ENCODE measurements at regions of chr16 and their contacts with region 1.

Region 1: DNA sequence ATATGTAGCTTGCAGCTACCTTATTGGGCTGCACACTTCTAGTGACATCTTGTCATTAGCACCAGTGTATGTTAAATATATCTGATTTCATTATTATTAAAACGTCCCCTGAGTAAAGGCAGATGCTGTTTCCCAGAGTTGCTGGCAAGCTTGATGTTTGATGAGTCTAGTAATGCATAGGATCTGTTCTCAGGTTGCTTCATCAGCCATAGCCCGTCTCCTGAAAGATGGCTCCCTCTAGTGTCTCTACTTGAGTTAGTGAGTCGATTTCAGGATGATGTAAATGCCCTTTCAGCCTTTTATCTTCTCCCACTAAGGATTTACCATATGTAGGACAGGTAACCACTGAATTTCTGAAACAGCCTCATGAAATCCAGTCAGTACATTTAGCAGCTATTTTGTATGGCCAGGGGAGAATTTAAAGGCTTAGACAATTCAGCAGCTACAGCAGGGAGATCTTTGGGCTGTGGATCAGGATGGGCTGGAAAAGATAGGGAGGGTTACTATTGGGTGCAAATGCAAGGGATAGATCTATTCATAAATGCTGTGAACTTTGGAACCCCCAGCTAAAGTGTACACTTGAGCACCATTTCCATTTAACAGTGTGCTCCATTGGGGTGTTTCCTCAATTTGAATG is 376.3 kb downstream of the CNTNAP4 start:
- DNase-seq: peak; percentile 44
- H3K4me3 Mint-ChIP-seq: no peak overlapping the region
- H3K27ac Mint-ChIP-seq: no peak overlapping the region
- H3K4me1 Mint-ChIP-seq: peaks cover 12% of the 10 kb centered on the region
- H3K27me3 Mint-ChIP-seq: peaks cover 13% of the 10 kb centered on the region
- CTCF ChIP-seq: peak; percentile 56

Region 2: GRCh38 chr16:75789237-75789636 is 864.3 kb before region 1 on chr16:
- CTCF ChIA-PET with region 1: no interaction called
- intact Hi-C with region 1: loop called (anchors 5 kb)
- DNase-seq: peak; percentile 38
- H3K4me3 Mint-ChIP-seq: no peak overlapping the region
- H3K27ac Mint-ChIP-seq: no peak overlapping the region
- H3K4me1 Mint-ChIP-seq: no peaks in the 10 kb centered on the region
- H3K27me3 Mint-ChIP-seq: peaks cover 29% of the 10 kb centered on the region
- CTCF ChIP-seq: peak; percentile 81

Region 3: GRCh38 chr16:75801307-75801706 is 852.2 kb before region 1 on chr16:
- CTCF ChIA-PET with region 1: interaction called, 9 read pairs
- intact Hi-C with region 1: loop called (anchors 5 kb)
- DNase-seq: no peak
- H3K4me3 Mint-ChIP-seq: no peak overlapping the region
- H3K27ac Mint-ChIP-seq: no peak overlapping the region
- H3K4me1 Mint-ChIP-seq: no peaks in the 10 kb centered on the region
- H3K27me3 Mint-ChIP-seq: peaks cover 27% of the 10 kb centered on the region
- CTCF ChIP-seq: no peak

Region 4: GRCh38 chr16:76278980-76279379 is 374.5 kb before region 1 on chr16:
- CTCF ChIA-PET with region 1: interaction called, 15 read pairs
- intact Hi-C with region 1: loop called (anchors 1 kb)
- DNase-seq: no peak
- H3K4me3 Mint-ChIP-seq: no peak overlapping the region
- H3K27ac Mint-ChIP-seq: no peak overlapping the region
- H3K4me1 Mint-ChIP-seq: no peaks in the 10 kb centered on the region
- H3K27me3 Mint-ChIP-seq: peaks cover 21% of the 10 kb centered on the region
- CTCF ChIP-seq: no peak

Region 5: DNA sequence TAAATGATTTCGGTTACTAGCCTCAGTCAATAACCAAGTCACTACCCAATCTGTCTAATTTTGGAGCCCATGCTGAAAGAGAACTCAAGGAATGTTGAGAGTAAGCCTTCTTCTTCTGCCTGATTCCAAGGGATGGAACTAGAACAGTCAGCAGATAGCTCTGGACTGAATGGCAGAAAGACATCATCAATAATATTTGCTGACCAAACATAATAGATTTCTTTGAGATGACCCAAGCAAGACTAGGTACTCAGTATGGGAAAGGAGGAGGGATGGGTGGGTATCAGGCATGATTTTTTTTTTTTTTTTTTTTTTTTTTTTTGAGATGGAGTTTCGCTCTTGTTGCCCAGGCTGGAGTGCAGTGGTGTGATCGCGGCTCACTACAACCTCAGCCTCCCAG is 46.2 kb before region 1 on chr16:
- CTCF ChIA-PET with region 1: no interaction called
- intact Hi-C with region 1: no loop called
- DNase-seq: no peak
- H3K4me3 Mint-ChIP-seq: no peak overlapping the region
- H3K27ac Mint-ChIP-seq: no peak overlapping the region
- H3K4me1 Mint-ChIP-seq: no peaks in the 10 kb centered on the region
- H3K27me3 Mint-ChIP-seq: no peaks in the 10 kb centered on the region
- CTCF ChIP-seq: no peak

Measured in Calu3 (cell line).